Naive thymus-derived CD4-positive, alpha-beta T cell (primary cell): ENCODE measurements at regions of chr13 and their contacts with region 1.

Region 1: GRCh38 chr13:30617315-30618185 is at the start of gene USPL1:
- DNase-seq: peak; percentile 92 to 99 (median 99)
- ATAC-seq: peak; percentile 95
- H3K4me3 ChIP-seq: peak within 1 kb of the TSS; percentile 84
- H3K4me3 Mint-ChIP-seq: no peak within 1 kb of the TSS
- H3K27ac ChIP-seq: peak within 1 kb of the TSS; percentile 97
- H3K27ac Mint-ChIP-seq: no peak within 1 kb of the TSS
- H3K4me1 ChIP-seq: peaks cover 11 to 13% of the 10 kb centered on the region in 2 donors
- H3K4me1 Mint-ChIP-seq: peaks cover 13 to 53% (median 36%) of the 10 kb centered on the region in 7 donors
- H3K27me3 ChIP-seq: no peaks in the 10 kb centered on the region
- H3K27me3 Mint-ChIP-seq: no peaks in the 10 kb centered on the region
- total RNA-seq, gene USPL1: 22.4 to 34.7 (median 30.4) TPM

Region 2: DNA sequence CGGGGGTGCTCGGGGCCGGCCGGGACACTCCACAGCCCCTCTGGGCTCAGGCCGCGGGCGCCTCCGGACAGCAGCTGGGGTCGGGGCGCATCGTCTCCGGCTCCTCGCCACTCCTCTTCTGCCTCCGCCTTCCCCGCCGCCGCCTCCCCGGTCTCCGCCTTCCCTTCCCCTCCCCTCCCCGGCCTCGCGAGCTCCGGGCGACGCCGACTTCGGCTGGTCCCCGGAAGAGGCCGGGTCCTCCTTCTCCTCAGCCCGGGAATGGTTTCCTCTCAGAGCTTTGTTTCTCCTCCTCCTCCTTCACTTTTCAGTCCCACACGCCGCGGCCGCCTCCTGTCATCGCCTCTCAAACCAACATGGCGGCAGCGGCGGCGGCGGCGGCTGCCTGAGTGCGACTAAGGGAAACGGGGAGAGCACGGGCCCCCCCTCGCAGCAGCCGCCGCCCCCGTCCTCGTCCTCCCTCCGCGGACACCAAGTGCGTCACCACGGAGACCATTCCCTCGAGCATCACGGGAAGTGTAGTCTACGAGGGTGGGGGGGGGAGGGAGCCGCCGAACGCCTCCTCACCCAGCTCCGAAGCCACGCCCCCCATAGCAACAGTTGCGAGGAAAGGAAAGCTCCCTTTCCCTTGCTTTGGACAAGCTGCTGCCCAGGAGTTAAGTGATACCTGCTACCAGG is 767.2 kb before region 1 on chr13 and contains the start of gene UBL3:
- CTCF ChIA-PET with region 1: no interaction called
- POLR2A ChIA-PET with region 1: interaction called, 13 read pairs
- intact Hi-C with region 1: loop called (anchors 1 kb)
- DNase-seq: peak; percentile 88 to 95 (median 92)
- ATAC-seq: peak; percentile 97
- H3K4me3 ChIP-seq: peak within 1 kb of the TSS; percentile 78
- H3K4me3 Mint-ChIP-seq: peak within 1 kb of the TSS; percentile 91 to 99 (median 96)
- H3K27ac ChIP-seq: peak within 1 kb of the TSS; percentile 98
- H3K27ac Mint-ChIP-seq: peak within 1 kb of the TSS; percentile 91 to 100 (median 99)
- H3K4me1 ChIP-seq: peaks cover 5 to 13% of the 10 kb centered on the region in 2 donors
- H3K4me1 Mint-ChIP-seq: peaks cover 10 to 42% (median 24%) of the 10 kb centered on the region in 7 donors
- H3K27me3 ChIP-seq: no peaks in the 10 kb centered on the region
- H3K27me3 Mint-ChIP-seq: no peaks in the 10 kb centered on the region
- total RNA-seq, gene UBL3: 12.7 to 34.5 (median 28.9) TPM

Region 3: DNA sequence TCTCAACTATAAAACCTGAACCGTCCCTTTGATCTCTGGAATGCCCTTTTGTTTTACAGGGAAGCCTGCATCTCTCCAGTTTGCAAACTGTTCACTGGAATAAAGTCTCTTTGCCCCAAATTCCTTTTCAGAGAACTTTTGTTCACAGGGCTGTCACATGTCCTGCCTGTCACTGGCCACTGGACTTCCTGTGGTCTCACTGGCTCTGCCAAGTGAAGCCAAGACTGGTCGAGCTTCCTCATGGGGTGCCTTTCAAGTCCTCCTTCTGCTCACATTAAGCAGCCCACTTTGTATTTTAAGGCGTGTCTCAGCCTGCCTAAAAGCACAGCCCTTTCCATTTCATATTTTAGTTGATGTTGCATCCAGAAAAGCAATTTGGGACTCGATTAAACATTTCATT is 525.9 kb before region 1 on chr13:
- CTCF ChIA-PET with region 1: no interaction called
- POLR2A ChIA-PET with region 1: no interaction called
- intact Hi-C with region 1: no loop called
- DNase-seq: no peak
- ATAC-seq: no peak
- H3K4me3 ChIP-seq: no peak overlapping the region
- H3K4me3 Mint-ChIP-seq: no peak overlapping the region
- H3K27ac ChIP-seq: no peak overlapping the region
- H3K27ac Mint-ChIP-seq: peak overlapping the region in 1 of 9 donors; percentile 65
- H3K4me1 ChIP-seq: no peaks in the 10 kb centered on the region
- H3K4me1 Mint-ChIP-seq: peaks cover 0 to 5% (median 0%) of the 10 kb centered on the region in 7 donors
- H3K27me3 ChIP-seq: no peaks in the 10 kb centered on the region
- H3K27me3 Mint-ChIP-seq: peaks cover 0 to 4% (median 0%) of the 10 kb centered on the region in 5 donors

Region 4: DNA sequence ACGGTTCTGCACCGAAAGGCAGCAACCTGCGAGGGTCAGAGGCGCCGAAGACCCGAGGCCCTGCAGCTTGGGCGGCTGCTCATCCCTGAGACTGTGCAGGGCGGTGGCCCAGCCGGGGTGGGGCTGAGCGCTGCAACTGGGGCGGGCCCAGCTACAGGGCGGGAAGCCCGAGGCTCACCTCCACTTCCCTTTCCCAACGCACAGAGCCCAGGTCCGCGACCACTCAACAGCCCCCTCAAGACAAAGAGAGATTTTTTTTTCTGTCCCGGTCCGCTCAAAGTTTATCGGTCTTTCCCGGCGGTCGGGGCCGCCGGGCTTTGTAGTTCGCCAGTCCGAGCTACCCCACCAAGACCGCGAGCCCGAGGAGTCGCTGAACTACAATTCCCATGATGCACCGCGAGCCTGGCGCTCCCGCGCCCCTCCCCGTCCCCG is 310.8 kb before region 1 on chr13:
- CTCF ChIA-PET with region 1: no interaction called
- POLR2A ChIA-PET with region 1: no interaction called
- intact Hi-C with region 1: loop called (anchors 1 to 2 kb)
- DNase-seq: peak; percentile 78 to 91 (median 88)
- ATAC-seq: peak; percentile 95
- H3K4me3 ChIP-seq: peak overlapping the region; percentile 96
- H3K4me3 Mint-ChIP-seq: peak overlapping the region; percentile 79 to 92 (median 89)
- H3K27ac ChIP-seq: peak overlapping the region; percentile 78
- H3K27ac Mint-ChIP-seq: peak overlapping the region in 8 of 9 donors; percentile 37 to 89 (median 82)
- H3K4me1 ChIP-seq: peaks cover 0 to 4% of the 10 kb centered on the region in 2 donors
- H3K4me1 Mint-ChIP-seq: peaks cover 0 to 48% (median 7%) of the 10 kb centered on the region in 7 donors
- H3K27me3 ChIP-seq: no peaks in the 10 kb centered on the region
- H3K27me3 Mint-ChIP-seq: no peaks in the 10 kb centered on the region

Region 5: GRCh38 chr13:30422054-30422839 is 195.3 kb before region 1 on chr13 and contains the start of gene UBE2L5:
- CTCF ChIA-PET with region 1: no interaction called
- POLR2A ChIA-PET with region 1: no interaction called
- intact Hi-C with region 1: loop called in 1 of 2 experiments (anchors 1 kb)
- DNase-seq: peak; percentile 41 to 89 (median 56)
- ATAC-seq: peak; percentile 92
- H3K4me3 ChIP-seq: peak within 1 kb of the TSS; percentile 67
- H3K4me3 Mint-ChIP-seq: peak within 1 kb of the TSS; percentile 80 to 94 (median 89)
- H3K27ac ChIP-seq: peak within 1 kb of the TSS; percentile 38
- H3K27ac Mint-ChIP-seq: peak within 1 kb of the TSS; percentile 64 to 93 (median 86)
- H3K4me1 ChIP-seq: no peaks in the 10 kb centered on the region
- H3K4me1 Mint-ChIP-seq: peaks cover 7 to 29% (median 15%) of the 10 kb centered on the region in 7 donors
- H3K27me3 ChIP-seq: no peaks in the 10 kb centered on the region
- H3K27me3 Mint-ChIP-seq: no peaks in the 10 kb centered on the region
- total RNA-seq, gene UBE2L5: not detected

Region 6: GRCh38 chr13:30673669-30674521 is 56.3 kb after region 1 on chr13:
- CTCF ChIA-PET with region 1: interaction called, 3 read pairs
- POLR2A ChIA-PET with region 1: interaction called, 8 read pairs
- intact Hi-C with region 1: loop called (anchors 1 kb)
- DNase-seq: peak; percentile 79 to 94 (median 86)
- ATAC-seq: peak; percentile 97
- H3K4me3 ChIP-seq: peak overlapping the region; percentile 67
- H3K4me3 Mint-ChIP-seq: peak overlapping the region; percentile 72 to 90 (median 88)
- H3K27ac ChIP-seq: peak overlapping the region; percentile 38
- H3K27ac Mint-ChIP-seq: peak overlapping the region; percentile 81 to 98 (median 91)
- H3K4me1 ChIP-seq: peaks cover 0 to 5% of the 10 kb centered on the region in 2 donors
- H3K4me1 Mint-ChIP-seq: peaks cover 2 to 32% (median 15%) of the 10 kb centered on the region in 7 donors
- H3K27me3 ChIP-seq: no peaks in the 10 kb centered on the region
- H3K27me3 Mint-ChIP-seq: peaks cover 0 to 36% (median 0%) of the 10 kb centered on the region in 5 donors

Region 7: DNA sequence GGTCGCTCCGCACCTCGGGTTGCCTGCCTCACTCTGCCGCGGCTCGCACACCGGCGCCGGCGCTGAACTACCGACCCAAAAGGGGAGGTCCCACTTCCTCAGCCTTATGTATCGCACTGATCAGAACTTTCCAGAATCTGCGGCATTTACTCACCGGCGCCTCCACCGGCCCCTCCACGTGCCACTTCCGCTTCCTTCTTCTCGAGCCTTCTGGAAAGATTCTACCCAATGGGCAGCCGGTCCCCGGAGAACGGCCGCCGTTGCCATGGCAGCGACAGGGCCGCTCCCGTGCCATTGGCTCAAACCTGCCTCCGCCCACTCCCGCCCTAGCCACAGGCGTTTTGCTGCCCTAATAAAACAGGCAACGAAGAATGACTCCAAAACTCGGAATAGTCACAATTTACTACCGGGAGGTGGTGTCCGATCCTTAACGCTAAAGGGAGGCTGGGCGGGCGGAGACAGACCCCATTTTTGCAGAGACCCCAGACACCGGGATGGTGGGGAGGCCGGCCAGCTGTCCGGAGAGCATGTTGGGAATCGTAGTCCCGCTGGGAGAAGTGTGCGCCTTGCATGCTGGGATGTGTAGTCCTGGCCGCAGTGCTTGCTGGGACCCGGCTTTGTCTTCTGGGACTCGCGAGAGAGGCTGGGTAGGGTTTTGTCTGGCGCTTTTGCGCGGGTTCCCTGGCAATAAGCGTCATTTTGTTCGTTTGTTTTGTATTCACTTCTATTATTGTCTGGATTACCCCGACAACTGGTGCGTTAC is 544.5 kb after region 1 on chr13 and contains the start of gene HSPH1:
- CTCF ChIA-PET with region 1: no interaction called
- POLR2A ChIA-PET with region 1: interaction called, 3 read pairs
- intact Hi-C with region 1: loop called (anchors 1 kb)
- DNase-seq: peak; percentile 95 to 100 (median 99)
- ATAC-seq: peak; percentile 91
- H3K4me3 ChIP-seq: peak within 1 kb of the TSS; percentile 89
- H3K4me3 Mint-ChIP-seq: peak within 1 kb of the TSS; percentile 92 to 98 (median 94)
- H3K27ac ChIP-seq: peak within 1 kb of the TSS; percentile 96
- H3K27ac Mint-ChIP-seq: peak within 1 kb of the TSS; percentile 98 to 99 (median 99)
- H3K4me1 ChIP-seq: peaks cover 22 to 26% of the 10 kb centered on the region in 2 donors
- H3K4me1 Mint-ChIP-seq: peaks cover 23 to 52% (median 47%) of the 10 kb centered on the region in 7 donors
- H3K27me3 ChIP-seq: no peaks in the 10 kb centered on the region
- H3K27me3 Mint-ChIP-seq: peaks cover 0 to 3% (median 0%) of the 10 kb centered on the region in 5 donors
- total RNA-seq, gene HSPH1: 65.5 to 154 (median 107) TPM